ENCODE measurements at regions of chr9 and their contacts with region 1.

Region 1: DNA sequence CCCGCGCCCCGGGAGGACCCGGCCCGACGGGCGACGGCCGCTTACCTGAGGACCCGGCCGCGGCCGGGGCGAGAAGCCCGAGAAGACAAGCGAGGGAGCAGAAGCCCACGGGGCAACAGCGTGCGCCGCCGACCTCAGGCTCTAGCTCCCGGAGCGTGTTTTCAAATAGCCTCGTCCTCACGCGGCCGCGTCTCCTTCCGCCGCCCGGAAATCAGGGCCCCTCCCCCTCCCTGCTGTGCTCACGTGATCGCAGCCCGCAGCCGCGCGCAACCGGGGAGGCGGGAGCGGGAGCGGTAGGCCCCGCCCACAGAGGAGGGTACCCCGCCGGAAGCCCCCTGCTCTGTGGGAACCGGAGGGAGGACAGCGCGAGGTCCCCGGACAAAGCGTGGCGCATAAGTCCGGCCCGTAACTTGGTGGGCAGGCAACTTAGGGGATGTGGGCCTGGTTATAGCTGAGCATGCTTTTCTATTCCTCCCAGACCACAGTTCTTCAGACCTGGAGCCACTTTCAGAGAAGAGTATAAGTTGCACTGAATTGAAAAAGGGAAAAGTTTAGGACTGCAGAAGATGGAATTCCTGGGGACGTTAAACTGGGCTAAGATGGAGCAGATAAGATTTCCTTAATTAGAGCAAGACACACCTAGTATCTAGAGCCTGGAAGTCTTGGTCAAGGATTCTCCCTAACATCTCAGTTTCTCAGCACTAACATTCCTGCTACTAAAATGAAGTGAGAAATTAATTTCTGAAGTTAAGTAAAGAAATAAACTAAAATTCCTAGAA is at the start of gene TEX10:
- DNase-seq: peak; percentile 92 to 98 (median 98)
- ATAC-seq: peak; percentile 88
- H3K4me3 ChIP-seq: peak within 1 kb of the TSS; percentile 97
- H3K27ac ChIP-seq: peak within 1 kb of the TSS; percentile 97
- H3K4me1 ChIP-seq: peaks cover 7 to 27% of the 10 kb centered on the region in 2 experiments; a peak in 4 of 5 replicates
- H3K27me3 ChIP-seq: no peaks in the 10 kb centered on the region
- CTCF ChIP-seq: no peak
- EP300 ChIP-seq: peak; percentile 31; the same call in 1 of the 2 replicates
- POLR2A ChIP-seq: peak; percentile 88
- RAD21 ChIP-seq: no peak
- polyA plus RNA-seq, gene TEX10: 27.8 to 60.0 TPM

Region 2: DNA sequence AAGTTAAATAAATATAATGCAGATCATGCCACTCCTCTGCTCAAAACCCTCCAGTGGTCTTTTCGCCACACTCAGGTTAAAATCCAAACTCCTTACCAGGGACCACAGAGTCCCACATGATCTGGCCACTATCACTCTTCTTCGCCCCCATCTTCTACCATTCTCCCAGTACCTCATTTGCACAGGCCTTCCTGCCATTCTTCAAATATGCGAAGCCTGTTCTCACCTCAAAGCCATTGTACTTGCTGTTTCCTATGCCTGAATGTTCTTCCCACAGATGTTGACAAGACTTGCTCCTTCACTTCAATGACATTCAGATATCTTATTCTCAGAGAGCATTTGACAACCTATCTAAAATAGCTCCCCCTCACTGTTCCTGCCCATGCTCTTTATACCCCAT is 11.0 kb before region 1 on chr9:
- CTCF ChIA-PET with region 1: no interaction called
- POLR2A ChIA-PET with region 1: interaction called, 21 read pairs
- in situ Hi-C with region 1: no loop called
- intact Hi-C with region 1: no loop called
- DNase-seq: no peak
- ATAC-seq: no peak
- H3K4me3 ChIP-seq: no peak overlapping the region
- H3K27ac ChIP-seq: no peak overlapping the region
- H3K4me1 ChIP-seq: no peaks in the 10 kb centered on the region
- H3K27me3 ChIP-seq: no peaks in the 10 kb centered on the region
- CTCF ChIP-seq: no peak
- EP300 ChIP-seq: no peak
- POLR2A ChIP-seq: no peak
- RAD21 ChIP-seq: no peak

Region 3: DNA sequence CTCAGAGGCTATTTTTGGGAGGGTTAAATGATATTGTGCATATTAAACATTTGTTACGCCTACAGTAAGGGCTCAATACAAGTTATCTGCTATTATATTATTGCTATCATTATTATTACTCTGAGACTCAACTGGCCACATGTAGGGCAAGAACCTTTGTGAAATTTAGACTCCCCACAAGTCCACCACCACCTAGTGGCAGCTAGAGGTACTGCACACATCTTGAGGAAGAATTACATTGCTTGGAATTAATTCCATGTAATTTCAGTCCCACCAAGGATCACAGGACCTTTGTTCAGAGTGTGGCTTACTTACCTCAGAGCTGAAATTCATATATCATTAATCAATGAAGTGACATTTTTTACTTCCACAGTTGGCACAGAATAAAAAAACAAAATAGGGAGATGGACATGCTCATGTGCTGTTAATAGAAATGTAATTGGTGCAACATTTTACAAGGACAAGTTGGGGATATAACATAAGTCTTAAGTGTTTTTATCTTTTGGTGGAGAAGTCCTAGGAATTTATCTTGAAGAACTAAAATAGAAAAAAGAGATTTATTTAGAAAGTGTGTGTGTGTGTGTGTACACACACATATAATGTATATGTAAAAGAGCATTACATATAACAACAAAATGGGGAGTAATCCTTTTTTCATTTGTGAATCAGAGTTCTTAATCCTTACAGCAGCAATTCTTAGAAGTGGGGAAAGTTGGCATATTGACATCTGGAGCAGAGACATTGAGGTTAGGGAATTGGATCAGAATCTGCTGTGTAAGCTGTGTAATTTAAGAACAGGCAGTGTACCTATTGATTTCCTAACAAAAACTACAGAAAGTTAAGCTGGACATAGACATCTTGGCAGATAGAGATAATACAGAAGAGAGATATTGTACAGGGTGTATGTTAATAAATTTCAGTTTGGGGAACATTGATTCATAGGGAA is 85.2 kb after region 1 on chr9:
- CTCF ChIA-PET with region 1: no interaction called
- POLR2A ChIA-PET with region 1: no interaction called
- in situ Hi-C with region 1: no loop called
- intact Hi-C with region 1: no loop called
- DNase-seq: peak; percentile 57 to 85 (median 62)
- ATAC-seq: peak; percentile 77
- H3K4me3 ChIP-seq: no peak overlapping the region
- H3K27ac ChIP-seq: no peak overlapping the region
- H3K4me1 ChIP-seq: peaks cover 0 to 21% of the 10 kb centered on the region in 2 experiments; a peak in 3 of 5 replicates
- H3K27me3 ChIP-seq: no peaks in the 10 kb centered on the region
- CTCF ChIP-seq: peak; percentile 80 to 87 (median 83)
- EP300 ChIP-seq: no peak
- POLR2A ChIP-seq: no peak
- RAD21 ChIP-seq: peak; percentile 59 to 72

Measured in K562 (cell line).